ENCODE measurements at regions of chr3 and their contacts with region 1.

Region 1: DNA sequence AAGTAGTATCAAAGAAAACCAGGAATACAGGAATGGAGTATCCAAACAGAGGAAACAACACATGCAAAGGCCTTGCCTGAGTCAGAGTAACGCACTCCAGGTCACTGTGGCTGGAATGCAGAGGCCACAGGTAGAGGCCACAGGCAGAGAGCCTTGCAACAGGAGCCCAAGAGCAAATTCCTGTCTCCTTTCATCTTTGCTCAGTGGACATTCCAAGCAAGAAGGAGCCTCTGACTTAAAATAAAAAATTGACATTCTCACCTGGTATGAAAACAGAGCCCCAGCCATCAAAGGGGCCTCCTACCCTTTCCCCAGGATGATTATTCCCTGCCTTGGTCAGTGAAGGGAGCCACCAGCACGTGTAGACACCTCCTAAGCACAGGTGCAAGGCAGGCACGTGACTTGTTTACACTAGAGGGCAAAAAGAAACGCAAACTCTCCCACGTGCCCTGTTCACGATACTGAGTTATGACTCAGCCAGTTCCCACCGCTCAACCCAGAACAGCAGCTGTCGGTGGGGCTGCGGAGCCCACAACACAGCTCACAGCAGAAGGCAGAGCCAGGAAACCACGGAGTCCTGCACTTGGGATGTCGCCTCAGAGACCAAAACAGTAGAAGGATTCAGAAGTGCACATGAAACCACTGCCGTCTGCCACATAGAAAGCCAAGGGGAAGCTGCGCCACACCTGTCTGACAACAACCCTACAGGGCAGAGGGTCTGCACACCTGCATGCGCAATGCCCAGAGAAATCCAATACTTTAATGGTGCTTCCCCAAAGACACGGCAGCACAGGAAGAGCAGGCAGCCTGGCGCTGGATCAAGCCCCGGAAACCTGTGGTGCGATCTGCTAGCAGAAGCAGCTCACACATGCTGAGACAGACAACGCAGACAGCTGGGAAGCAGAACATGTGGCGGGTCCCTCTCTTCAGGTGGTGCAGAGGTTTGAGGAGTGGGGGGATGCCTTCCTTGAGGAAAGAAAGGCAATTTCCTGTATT is 52.1 kb downstream of the ITGB5 start:
- DNase-seq: peak; percentile 51 to 80
- ATAC-seq: peak; percentile 88 to 95 (median 91)
- H3K4me3 ChIP-seq: peak overlapping the region; percentile 55
- H3K27ac ChIP-seq: peak overlapping the region; percentile 91
- H3K4me1 ChIP-seq: peaks cover 43% of the 10 kb centered on the region
- H3K27me3 ChIP-seq: no peaks in the 10 kb centered on the region
- CTCF ChIP-seq: no peak

Region 2: DNA sequence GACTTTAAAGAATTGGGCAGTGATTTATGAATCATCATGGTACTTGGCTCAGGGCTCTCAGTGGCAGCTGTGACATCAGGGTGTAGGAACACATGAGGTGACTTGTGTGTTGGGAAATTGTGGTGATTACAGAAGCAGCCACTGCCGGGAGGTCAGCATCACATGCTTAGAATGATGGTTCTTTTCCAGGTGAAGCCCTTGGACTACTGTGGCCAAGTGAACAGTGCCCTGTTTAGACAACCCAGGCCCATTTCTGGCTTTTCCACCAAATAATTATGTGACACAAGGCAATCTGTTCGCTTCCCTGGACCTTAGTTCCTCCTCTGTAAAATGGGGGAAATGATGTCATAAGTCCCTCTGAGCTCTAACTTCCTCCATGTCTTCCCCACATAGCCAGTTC is 703.4 kb before region 1 on chr3:
- intact Hi-C with region 1: no loop called
- DNase-seq: peak; percentile 22 to 52
- ATAC-seq: peak; percentile 92 to 99 (median 98)
- H3K4me3 ChIP-seq: no peak overlapping the region
- H3K27ac ChIP-seq: peak overlapping the region; percentile 44
- H3K4me1 ChIP-seq: peaks cover 16% of the 10 kb centered on the region
- H3K27me3 ChIP-seq: no peaks in the 10 kb centered on the region
- CTCF ChIP-seq: no peak

Region 3: DNA sequence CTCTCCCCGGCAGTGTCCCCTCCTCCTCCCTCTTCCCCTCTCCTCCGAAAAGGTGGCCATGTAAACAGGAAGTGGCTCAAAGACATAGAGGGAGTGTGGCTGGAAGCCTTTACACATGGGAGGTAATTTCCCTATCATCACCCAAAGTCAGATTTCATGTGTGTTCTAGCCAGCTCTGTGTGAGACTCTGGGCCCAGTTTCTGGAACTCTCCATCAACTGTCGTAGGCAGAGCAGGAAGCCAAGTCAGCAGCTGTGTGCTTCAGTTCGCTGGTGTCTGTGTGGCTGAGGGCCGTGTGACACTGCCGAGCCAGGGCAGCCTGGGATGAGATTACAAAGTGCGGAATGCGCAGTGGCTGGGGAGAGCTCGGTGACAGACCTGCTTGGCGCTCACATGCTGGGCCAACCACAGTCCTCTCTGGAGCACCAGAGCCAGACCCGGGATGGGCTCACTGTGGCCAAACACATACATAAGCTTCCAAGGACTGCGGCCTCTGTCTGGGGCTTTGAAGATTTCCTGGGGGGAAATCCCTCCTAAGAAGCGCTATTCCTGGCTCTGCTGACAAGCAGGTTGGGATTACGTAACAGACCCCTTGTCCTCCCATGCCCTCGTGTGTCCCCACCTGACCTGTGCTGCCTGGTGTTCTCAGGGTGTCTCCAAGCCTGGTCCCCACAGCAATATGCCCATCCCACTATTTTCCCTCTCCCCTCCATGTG is 54.1 kb before region 1 on chr3:
- intact Hi-C with region 1: loop called in 1 of 2 experiments (anchors 1 kb)
- DNase-seq: peak; percentile 90 to 94
- ATAC-seq: peak; percentile 95 to 96 (median 95)
- H3K4me3 ChIP-seq: peak overlapping the region; percentile 5
- H3K27ac ChIP-seq: peak overlapping the region; percentile 92
- H3K4me1 ChIP-seq: peaks cover 40% of the 10 kb centered on the region
- H3K27me3 ChIP-seq: no peaks in the 10 kb centered on the region
- CTCF ChIP-seq: no peak

Region 4: GRCh38 chr3:124887177-124887931 is 52.3 kb after region 1 on chr3 and contains the start of gene ITGB5:
- intact Hi-C with region 1: loop called in 1 of 2 experiments (anchors 5 kb)
- DNase-seq: peak; percentile 87 to 90
- ATAC-seq: peak; percentile 87 to 94 (median 90)
- H3K4me3 ChIP-seq: peak within 1 kb of the TSS; percentile 91
- H3K27ac ChIP-seq: peak within 1 kb of the TSS; percentile 92
- H3K4me1 ChIP-seq: peaks cover 14% of the 10 kb centered on the region
- H3K27me3 ChIP-seq: no peaks in the 10 kb centered on the region
- CTCF ChIP-seq: no peak
- total RNA-seq, gene ITGB5: 37.5 to 61.5 (median 54.8) TPM

Region 5: DNA sequence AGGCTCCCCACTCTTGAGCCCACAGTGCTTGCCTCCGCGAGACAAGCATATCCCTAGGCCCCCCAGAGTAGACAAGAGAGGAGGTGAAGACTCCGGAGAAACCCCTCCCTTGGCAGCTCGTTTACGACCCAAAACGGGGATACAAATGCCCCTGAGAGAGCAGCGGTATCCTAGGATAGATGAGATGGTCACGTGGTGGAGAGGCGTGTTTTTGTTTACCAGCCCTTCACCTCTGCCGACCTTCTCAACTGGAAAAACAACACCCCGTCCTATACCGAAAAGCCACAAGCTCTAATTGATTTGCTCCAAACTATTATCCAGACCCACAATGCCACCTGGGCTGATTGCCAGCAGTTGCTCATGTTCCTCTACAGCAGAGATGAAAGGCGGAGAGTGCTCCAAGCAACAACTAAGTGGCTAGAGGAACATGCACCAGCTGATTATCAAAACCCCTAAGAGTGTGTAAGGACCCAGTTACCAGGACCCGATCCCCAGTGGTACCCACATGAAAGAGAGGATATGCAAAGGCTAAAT is 859.8 kb after region 1 on chr3:
- intact Hi-C with region 1: no loop called
- DNase-seq: no peak
- ATAC-seq: no peak
- H3K4me3 ChIP-seq: no peak overlapping the region
- H3K27ac ChIP-seq: no peak overlapping the region
- H3K4me1 ChIP-seq: no peaks in the 10 kb centered on the region
- H3K27me3 ChIP-seq: peaks cover 0 to 2% (median 0%) of the 10 kb centered on the region in 3 donors
- CTCF ChIP-seq: no peak

Measured in psoas muscle (tissue), 8 donors.